ENCODE measurements at regions of chr17 and their contacts with region 1.

Region 1: GRCh38 chr17:42405963-42406495 is 17.0 kb downstream of the CAVIN1 start:
- DNase-seq: peak; percentile 95
- H3K4me3 ChIP-seq: peak overlapping the region in 1 of 8 donors; percentile 19
- H3K27ac ChIP-seq: peak overlapping the region in 7 of 8 donors; percentile 72 to 87 (median 80)
- H3K4me1 ChIP-seq: peaks cover 16 to 89% (median 52%) of the 10 kb centered on the region in 6 donors
- H3K27me3 ChIP-seq: no peaks in the 10 kb centered on the region
- CTCF ChIP-seq: peak; percentile 86 to 96 (median 90)
- POLR2A ChIP-seq: no peak

Region 2: DNA sequence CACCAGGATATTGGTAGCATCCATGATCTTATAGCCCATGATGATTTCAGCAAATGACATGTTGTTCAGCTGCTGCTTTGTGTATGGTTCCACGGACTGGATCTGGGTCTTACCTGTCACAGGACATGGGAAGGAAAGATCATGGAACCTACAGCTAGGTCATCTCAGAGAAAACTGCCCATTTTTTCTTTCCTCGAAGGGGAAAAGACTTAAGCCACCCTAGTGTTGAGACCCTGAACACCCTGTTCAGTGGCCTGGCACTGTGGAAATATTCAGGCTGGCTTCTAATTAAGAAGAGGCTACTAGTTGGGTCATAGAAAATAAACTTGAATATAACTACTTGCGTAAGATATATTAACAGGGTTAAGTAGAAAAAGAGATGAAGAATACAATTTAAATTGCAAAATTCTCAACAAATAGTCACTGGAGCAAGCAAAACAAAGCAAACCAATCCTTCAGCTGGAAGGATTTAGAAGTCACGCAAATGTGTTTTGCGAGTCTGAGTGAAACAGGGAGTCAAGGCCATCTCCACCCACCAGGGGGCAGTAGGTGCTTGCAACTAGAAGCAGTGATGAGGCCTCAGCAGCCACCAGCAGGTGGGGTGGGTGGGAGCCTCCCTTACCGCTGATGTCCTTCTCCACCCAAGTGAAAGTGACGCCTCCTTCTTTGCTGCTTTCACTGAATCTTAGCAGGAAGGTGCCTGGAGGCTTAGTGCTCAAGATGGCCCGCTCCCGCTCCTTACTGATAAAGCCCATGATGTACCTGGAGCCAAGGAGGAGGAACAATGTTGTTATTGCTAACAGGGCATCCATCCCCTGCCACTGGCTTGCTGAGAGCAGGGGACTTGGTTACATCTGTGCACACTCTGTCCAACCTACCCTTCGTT is 83.4 kb before region 1 on chr17:
- intact Hi-C with region 1: loop called (anchors 5 kb)
- DNase-seq: peak; percentile 97
- H3K4me3 ChIP-seq: no peak overlapping the region
- H3K27ac ChIP-seq: peak overlapping the region in 6 of 8 donors; percentile 18 to 70 (median 34)
- H3K4me1 ChIP-seq: peaks cover 27 to 64% (median 43%) of the 10 kb centered on the region in 6 donors
- H3K27me3 ChIP-seq: no peaks in the 10 kb centered on the region
- CTCF ChIP-seq: peak; percentile 98 to 100 (median 99)
- POLR2A ChIP-seq: no peak